Activated B cell treated with CpG ODN at 0.5 μM for 24 hours (primary cell): ENCODE measurements at regions of chr10 and their contacts with region 1.

Region 1: GRCh38 chr10:69957886-69958555 is 94.6 kb upstream of the MACROH2A2 start:
- DNase-seq: no peak
- ATAC-seq: no peak
- H3K4me3 Mint-ChIP-seq: no peak overlapping the region
- H3K27ac Mint-ChIP-seq: no peak overlapping the region
- H3K4me1 Mint-ChIP-seq: peaks cover 39% of the 10 kb centered on the region
- H3K27me3 Mint-ChIP-seq: no peaks in the 10 kb centered on the region
- CTCF ChIP-seq: no peak

Region 2: DNA sequence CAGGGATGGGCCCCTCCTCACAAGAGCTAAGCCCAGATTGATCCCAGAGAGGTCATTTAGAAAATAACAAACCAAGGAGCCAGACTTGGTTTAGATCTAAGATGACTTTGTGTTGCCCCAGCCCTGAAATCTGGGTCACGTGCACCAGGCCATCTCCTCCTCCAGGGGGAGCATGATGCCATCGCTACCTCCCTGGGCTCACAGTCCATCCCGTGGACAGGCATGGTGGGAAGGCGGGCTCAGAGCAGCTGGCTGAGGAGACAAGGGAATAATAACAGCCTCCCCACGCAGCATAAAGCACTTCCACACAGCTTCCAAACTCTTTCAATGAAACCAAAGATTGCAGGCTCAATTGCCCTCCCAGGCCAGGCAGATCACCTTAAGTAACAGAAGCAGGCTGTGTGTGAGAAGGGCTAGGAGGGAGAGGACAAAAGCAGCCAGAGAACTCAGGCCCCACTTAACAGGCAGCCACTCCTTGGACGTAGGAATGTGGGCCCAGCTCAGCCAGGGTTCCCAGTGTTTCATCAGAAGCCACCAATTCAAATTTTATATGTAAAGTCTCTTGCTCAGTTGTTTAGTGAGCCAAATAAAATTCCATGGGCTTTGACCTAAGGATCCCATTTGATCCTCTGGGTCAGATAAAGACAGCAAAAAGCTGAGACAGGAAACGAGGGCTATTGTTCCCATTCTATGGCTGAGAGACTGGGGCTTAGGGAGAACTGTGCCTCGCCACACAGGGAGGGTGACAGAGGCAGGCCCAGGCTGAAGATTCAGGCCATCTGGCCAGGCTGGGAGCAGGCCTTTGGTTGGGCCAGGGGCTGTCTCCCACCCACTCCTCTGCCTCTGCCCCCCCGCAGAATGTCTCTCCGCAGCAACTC is 56.2 kb before region 1 on chr10:
- CTCF ChIA-PET with region 1: interaction called, 3 read pairs
- POLR2A ChIA-PET with region 1: interaction called, 4 read pairs
- intact Hi-C with region 1: loop called (anchors 5 kb)
- DNase-seq: no peak
- ATAC-seq: peak; percentile 31
- H3K4me3 Mint-ChIP-seq: no peak overlapping the region
- H3K27ac Mint-ChIP-seq: no peak overlapping the region
- H3K4me1 Mint-ChIP-seq: no peaks in the 10 kb centered on the region
- H3K27me3 Mint-ChIP-seq: peaks cover 5% of the 10 kb centered on the region
- CTCF ChIP-seq: no peak

Region 3: DNA sequence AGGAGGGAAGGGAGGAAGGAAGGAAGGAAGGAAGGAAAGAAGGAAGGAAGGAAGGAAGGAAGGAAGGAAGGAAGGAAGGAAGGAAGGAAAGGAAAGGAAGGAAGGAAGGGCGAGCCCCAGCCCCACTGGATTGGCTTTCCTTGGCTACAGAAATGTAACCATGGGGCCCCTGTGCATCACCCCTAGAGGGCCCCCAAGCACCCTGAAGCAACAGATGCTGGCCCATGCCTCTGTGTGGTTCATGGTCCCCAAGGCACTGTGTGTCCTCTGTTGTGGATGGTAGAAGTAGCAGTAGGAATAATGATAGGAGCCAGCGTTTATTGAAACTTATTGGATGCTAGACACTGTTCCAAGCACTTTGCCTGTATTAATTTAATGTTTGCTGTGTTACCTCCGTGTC is 21.9 kb before region 1 on chr10:
- CTCF ChIA-PET with region 1: interaction called, 9 read pairs
- POLR2A ChIA-PET with region 1: interaction called, 3 read pairs
- intact Hi-C with region 1: loop called (anchors 1 kb)
- DNase-seq: no peak
- ATAC-seq: peak; percentile 52
- H3K4me3 Mint-ChIP-seq: no peak overlapping the region
- H3K27ac Mint-ChIP-seq: no peak overlapping the region
- H3K4me1 Mint-ChIP-seq: no peaks in the 10 kb centered on the region
- H3K27me3 Mint-ChIP-seq: no peaks in the 10 kb centered on the region
- CTCF ChIP-seq: no peak

Region 4: DNA sequence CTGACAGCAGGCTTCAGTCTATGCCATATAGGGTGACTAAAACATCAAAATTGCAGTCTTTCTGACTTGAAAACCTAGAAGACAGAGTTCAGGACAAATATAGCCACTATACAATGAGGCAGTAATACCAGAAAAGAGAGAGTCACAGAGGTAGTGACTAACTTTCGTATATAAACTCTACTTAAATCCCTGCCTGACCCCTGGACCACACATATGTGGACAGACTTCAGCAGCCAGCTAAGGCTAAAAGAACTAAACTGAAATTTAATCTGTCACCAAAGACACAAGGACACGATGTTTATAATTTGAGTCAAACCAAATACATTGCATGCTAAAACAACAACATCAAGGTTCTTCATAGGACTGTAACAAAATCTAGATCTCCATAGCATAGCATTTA is 30.1 kb after region 1 on chr10:
- CTCF ChIA-PET with region 1: interaction called, 3 read pairs
- POLR2A ChIA-PET with region 1: interaction called, 10 read pairs
- intact Hi-C with region 1: no loop called
- DNase-seq: no peak
- ATAC-seq: no peak
- H3K4me3 Mint-ChIP-seq: no peak overlapping the region
- H3K27ac Mint-ChIP-seq: no peak overlapping the region
- H3K4me1 Mint-ChIP-seq: no peaks in the 10 kb centered on the region
- H3K27me3 Mint-ChIP-seq: peaks cover 14% of the 10 kb centered on the region
- CTCF ChIP-seq: no peak

Region 5: GRCh38 chr10:70000262-70000661 is 42.2 kb after region 1 on chr10:
- CTCF ChIA-PET with region 1: no interaction called
- POLR2A ChIA-PET with region 1: no interaction called
- intact Hi-C with region 1: no loop called
- DNase-seq: no peak
- ATAC-seq: no peak
- H3K4me3 Mint-ChIP-seq: no peak overlapping the region
- H3K27ac Mint-ChIP-seq: no peak overlapping the region
- H3K4me1 Mint-ChIP-seq: no peaks in the 10 kb centered on the region
- H3K27me3 Mint-ChIP-seq: peaks cover 22% of the 10 kb centered on the region
- CTCF ChIP-seq: no peak